BJ (cell line): ENCODE measurements at regions of chr15 and their contacts with region 1.

Region 1: DNA sequence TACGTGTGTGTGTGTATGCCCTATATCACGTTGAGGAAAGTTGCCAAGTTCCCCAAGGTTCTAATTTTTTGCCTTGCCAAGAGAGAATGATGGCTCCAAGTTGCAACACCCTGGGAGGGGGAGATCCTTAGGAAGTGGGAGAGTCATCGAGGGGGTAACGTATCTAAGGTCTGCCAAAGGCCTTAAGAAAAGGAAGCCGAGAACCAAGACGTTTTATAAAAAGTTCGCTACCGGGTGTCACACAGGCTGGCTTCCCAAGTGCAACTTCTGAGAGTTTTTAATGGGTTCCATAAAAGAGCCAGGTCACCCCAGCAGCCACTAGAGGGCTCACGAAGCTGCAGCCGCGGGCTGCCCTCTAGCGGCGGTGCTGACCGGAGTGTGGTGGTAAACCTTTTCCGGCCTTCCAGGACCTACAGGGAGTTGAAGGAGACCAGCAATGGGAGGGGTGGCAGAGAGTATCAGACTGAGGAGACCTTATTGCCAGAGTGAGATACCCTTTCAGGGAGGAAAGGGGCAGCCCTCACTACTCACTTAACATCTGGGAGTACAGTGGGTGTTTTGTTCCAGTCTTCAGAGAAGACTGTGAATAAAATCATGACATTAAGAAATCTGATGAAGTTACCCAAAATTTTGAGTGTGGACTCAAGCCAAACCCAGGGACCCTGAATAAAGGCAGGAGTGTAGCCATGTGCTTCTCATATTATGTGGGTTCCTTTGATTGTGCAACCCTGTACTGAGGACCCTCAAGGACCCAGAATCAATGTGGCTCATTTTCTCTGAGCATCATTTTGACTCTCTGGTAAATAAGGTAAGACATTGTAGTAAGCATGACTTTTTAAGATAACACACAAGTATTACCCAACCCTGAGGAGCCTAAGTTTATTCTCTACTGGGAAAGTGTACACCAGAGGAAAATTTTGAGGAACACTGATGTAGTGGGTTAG is 2.5 kb upstream of the RFX7 start:
- DNase-seq: no peak
- H3K4me3 ChIP-seq: no peak overlapping the region
- H3K27me3 ChIP-seq: no peaks in the 10 kb centered on the region
- CTCF ChIP-seq: peak; percentile 100

Region 2: GRCh38 chr15:56261854-56262509 is 15.8 kb after region 1 on chr15:
- CTCF ChIA-PET with region 1: interaction called, 13 read pairs
- POLR2A ChIA-PET with region 1: no interaction called
- DNase-seq: no peak
- H3K4me3 ChIP-seq: no peak overlapping the region
- H3K27me3 ChIP-seq: no peaks in the 10 kb centered on the region
- CTCF ChIP-seq: no peak

Region 3: GRCh38 chr15:56356616-56357015 is 110.5 kb after region 1 on chr15:
- CTCF ChIA-PET with region 1: no interaction called
- POLR2A ChIA-PET with region 1: no interaction called
- DNase-seq: peak; percentile 7
- H3K4me3 ChIP-seq: no peak overlapping the region
- H3K27me3 ChIP-seq: no peaks in the 10 kb centered on the region
- CTCF ChIP-seq: no peak

Region 4: GRCh38 chr15:56428821-56429458 is 182.8 kb after region 1 on chr15:
- CTCF ChIA-PET with region 1: interaction called, 59 read pairs
- POLR2A ChIA-PET with region 1: no interaction called
- DNase-seq: no peak
- H3K4me3 ChIP-seq: no peak overlapping the region
- H3K27me3 ChIP-seq: no peaks in the 10 kb centered on the region
- CTCF ChIP-seq: peak; percentile 44

Region 5: DNA sequence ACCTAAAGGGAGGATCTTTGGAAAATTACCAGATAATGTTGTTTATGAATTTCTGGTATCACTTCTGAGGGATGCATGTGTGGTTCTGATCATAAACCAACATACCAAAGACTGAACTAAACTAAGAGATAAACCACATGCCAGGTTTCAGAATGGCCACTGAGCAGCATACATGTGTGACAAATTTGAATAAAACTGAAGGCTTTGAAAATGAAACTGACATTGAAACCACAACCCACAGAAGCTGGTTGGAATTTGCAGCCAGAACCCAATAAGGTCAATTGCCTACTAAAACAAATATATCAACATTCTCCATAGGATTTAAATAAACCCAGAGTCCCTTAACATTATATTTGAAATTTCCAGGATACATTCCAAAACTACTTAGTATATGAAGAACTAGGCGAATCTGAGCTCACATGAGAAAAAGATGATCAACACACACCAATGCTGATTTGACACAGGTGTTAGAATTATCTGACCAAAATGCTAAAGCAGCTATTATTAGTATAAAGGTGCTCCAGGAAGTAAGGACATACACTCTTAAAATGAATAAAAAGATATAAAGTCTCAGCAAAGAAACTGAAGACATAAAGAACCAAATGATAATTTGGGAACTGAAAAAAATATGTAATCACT is 362.1 kb after region 1 on chr15:
- CTCF ChIA-PET with region 1: no interaction called
- POLR2A ChIA-PET with region 1: no interaction called
- DNase-seq: no peak
- H3K4me3 ChIP-seq: no peak overlapping the region
- H3K27me3 ChIP-seq: no peaks in the 10 kb centered on the region
- CTCF ChIP-seq: no peak

Region 6: DNA sequence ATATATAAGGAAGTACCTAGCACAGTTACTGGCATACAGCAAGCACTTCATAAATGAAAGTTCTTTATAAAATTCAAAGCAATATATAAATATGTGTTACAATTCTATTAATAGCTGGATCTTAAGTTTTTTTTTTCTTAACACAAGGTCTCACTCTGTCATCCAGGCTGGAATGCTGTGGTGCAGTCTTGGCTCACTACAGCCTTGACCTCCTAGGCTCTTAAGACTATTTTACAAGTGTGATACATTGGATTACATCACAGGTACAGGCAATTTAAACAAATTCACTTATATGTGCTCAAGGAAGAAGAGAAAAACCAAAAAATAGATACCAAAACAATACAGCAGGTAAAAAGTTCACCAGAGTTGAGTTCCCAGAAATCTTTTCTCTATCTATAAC is 426.6 kb after region 1 on chr15:
- CTCF ChIA-PET with region 1: no interaction called
- POLR2A ChIA-PET with region 1: no interaction called
- DNase-seq: peak; percentile 38
- H3K4me3 ChIP-seq: no peak overlapping the region
- H3K27me3 ChIP-seq: no peaks in the 10 kb centered on the region
- CTCF ChIP-seq: no peak